T-cell (primary cell): ENCODE measurements at regions of chr15 and their contacts with region 1.

Region 1: GRCh38 chr15:70717237-70717793 is 46.0 kb downstream of the UACA start:
- DNase-seq: no peak
- ATAC-seq: no peak
- H3K4me3 ChIP-seq: no peak overlapping the region
- H3K4me3 Mint-ChIP-seq: no peak overlapping the region
- H3K27ac ChIP-seq: no peak overlapping the region
- H3K27ac Mint-ChIP-seq: no peak overlapping the region
- H3K4me1 ChIP-seq: no peaks in the 10 kb centered on the region
- H3K4me1 Mint-ChIP-seq: peaks cover 0 to under 1% (median 0%) of the 10 kb centered on the region in 3 donors
- H3K27me3 ChIP-seq: peaks cover 0 to 3% of the 10 kb centered on the region in 2 experiments
- H3K27me3 Mint-ChIP-seq: peaks cover 12 to 13% of the 10 kb centered on the region in 2 donors

Region 2: GRCh38 chr15:70526340-70527325 is 190.7 kb before region 1 on chr15:
- CTCF ChIA-PET with region 1: no interaction called
- POLR2A ChIA-PET with region 1: no interaction called
- DNase-seq: peak in 2 of 35 experiments; percentile 19 to 35
- ATAC-seq: no peak
- H3K4me3 ChIP-seq: no peak overlapping the region
- H3K4me3 Mint-ChIP-seq: peak overlapping the region in 1 of 3 donors; percentile 78
- H3K27ac ChIP-seq: no peak overlapping the region
- H3K27ac Mint-ChIP-seq: peak overlapping the region in 1 of 2 donors; percentile 24
- H3K4me1 ChIP-seq: peaks cover 34 to 52% of the 10 kb centered on the region in 2 experiments
- H3K4me1 Mint-ChIP-seq: peaks cover 68 to 77% (median 71%) of the 10 kb centered on the region in 3 donors
- H3K27me3 ChIP-seq: no peaks in the 10 kb centered on the region
- H3K27me3 Mint-ChIP-seq: no peaks in the 10 kb centered on the region

Region 3: GRCh38 chr15:70596354-70597055 is 120.8 kb before region 1 on chr15:
- CTCF ChIA-PET with region 1: no interaction called
- POLR2A ChIA-PET with region 1: no interaction called
- DNase-seq: no peak
- ATAC-seq: no peak
- H3K4me3 ChIP-seq: no peak overlapping the region
- H3K4me3 Mint-ChIP-seq: no peak overlapping the region
- H3K27ac ChIP-seq: no peak overlapping the region
- H3K27ac Mint-ChIP-seq: no peak overlapping the region
- H3K4me1 ChIP-seq: no peaks in the 10 kb centered on the region
- H3K4me1 Mint-ChIP-seq: no peaks in the 10 kb centered on the region
- H3K27me3 ChIP-seq: peaks cover 0 to 3% of the 10 kb centered on the region in 2 experiments
- H3K27me3 Mint-ChIP-seq: peaks cover 4 to 10% of the 10 kb centered on the region in 2 donors

Region 4: GRCh38 chr15:72011302-72011942 is 1294.1 kb after region 1 on chr15:
- CTCF ChIA-PET with region 1: no interaction called
- POLR2A ChIA-PET with region 1: interaction called in 1 of 2 experiments, 11 read pairs
- DNase-seq: no peak
- ATAC-seq: no peak
- H3K4me3 ChIP-seq: no peak overlapping the region
- H3K4me3 Mint-ChIP-seq: no peak overlapping the region
- H3K27ac ChIP-seq: no peak overlapping the region
- H3K27ac Mint-ChIP-seq: no peak overlapping the region
- H3K4me1 ChIP-seq: no peaks in the 10 kb centered on the region
- H3K4me1 Mint-ChIP-seq: no peaks in the 10 kb centered on the region
- H3K27me3 ChIP-seq: no peaks in the 10 kb centered on the region
- H3K27me3 Mint-ChIP-seq: no peaks in the 10 kb centered on the region